ENCODE measurements at regions of chr17 and their contacts with region 1.

Region 1: DNA sequence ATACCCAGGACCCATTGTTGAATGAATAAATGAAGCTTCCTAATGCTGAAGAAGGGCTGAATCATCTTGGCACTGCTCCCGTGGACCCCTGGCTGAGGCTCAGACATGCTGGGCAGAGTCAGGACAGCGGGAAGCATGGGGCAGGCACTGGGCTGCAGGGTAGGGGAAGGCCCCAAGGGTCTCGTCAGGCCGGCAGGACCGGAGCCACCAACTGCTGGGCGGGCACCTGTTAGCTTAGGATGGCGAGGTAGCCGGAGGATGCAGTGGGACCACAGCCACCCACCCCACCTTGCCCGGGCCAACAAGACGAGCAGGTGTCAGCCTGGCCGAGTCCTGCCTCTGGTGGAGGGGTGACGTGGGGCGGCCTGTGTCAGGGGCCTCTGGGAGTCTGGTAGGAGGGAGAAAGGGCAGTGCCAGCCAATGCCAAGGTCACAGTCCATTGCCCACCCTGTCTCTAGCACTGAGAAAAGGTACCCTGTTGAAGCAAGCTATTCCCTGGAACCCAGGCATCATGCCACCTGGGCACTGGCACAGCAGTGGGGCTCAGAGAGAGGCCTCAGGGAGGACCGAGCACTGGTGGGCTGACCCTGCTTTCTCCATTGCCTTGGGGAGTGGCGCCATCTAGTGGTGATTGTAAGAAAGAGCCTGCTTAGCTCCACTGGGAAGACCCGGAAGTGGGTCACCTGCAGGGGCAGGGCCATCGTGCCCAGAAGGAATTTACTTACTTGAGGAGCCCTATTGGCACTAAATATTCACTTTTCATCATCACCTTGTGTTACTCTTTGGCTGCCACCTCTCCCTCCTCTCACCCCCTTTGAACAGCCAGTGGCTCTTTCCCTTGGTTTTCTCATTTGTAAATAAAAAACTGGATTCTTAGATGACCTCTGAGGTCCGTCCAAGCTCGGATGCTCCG is 3.0 kb upstream of the DLX3 start:
- DNase-seq: peak; percentile 92

Region 2: DNA sequence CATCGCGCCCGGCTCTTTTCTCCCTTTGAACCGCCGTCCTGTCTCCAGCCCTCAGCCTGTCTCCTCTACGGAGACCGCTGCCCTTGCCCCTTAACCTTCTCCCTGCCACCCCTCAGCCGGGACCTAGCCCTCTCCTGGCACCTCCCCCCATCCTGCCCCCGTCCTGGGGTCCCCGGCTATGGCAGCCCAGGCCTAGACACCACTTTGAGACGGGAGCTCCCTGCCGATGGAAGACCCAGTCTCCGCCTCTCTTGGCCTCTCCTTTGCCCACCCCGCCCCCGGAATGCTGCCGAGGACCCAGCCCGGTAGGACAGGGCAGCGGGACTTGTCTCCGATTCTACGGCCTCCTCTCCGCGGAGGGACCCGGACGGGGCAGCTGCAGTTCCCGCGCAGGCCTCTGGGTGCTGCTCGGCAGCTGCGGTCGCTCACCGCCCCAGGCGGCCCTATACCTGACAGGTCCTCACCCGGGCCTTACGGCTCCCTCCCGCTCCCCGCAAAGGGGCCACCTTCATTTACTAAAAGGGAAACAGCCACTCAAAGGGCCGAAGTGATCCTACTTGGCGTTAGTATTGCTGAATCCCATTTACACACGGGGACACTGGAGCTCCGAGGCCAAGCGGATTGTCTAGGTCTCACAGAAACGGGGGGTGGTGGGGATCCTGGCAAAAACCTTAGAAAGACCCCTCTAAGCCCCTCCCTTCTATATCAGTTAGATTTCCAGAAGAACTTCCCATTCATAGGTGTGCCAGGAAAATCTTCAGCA is 117.6 kb before region 1 on chr17:
- in situ Hi-C with region 1: loop called (anchors 5 kb)
- DNase-seq: peak; percentile 73

Measured in ACHN (cell line).